Right ventricle myocardium inferior (tissue), 1 donor: ENCODE measurements at regions of chr7 and their contacts with region 1.

Region 1: GRCh38 chr7:30026229-30027064 is at the start of gene FKBP14:
- DNase-seq: peak; percentile 97
- ATAC-seq: peak; percentile 96
- total RNA-seq, gene FKBP14: 8.5 TPM

Region 2: GRCh38 chr7:29976673-29977415 is 49.6 kb before region 1 on chr7:
- intact Hi-C with region 1: no loop called
- DNase-seq: peak; percentile 82
- ATAC-seq: peak; percentile 79

Region 3: GRCh38 chr7:30112103-30112713 is 85.8 kb after region 1 on chr7:
- intact Hi-C with region 1: no loop called
- DNase-seq: no peak
- ATAC-seq: no peak

Region 4: GRCh38 chr7:30134611-30135545 is 108.4 kb after region 1 on chr7 and contains the start of gene MTURN:
- intact Hi-C with region 1: loop called (anchors 5 kb)
- DNase-seq: peak; percentile 96
- ATAC-seq: peak; percentile 88
- total RNA-seq, gene MTURN: 15.7 TPM